AG04449 (cell line): ENCODE measurements at regions of chr19 and their contacts with region 1.

Region 1: DNA sequence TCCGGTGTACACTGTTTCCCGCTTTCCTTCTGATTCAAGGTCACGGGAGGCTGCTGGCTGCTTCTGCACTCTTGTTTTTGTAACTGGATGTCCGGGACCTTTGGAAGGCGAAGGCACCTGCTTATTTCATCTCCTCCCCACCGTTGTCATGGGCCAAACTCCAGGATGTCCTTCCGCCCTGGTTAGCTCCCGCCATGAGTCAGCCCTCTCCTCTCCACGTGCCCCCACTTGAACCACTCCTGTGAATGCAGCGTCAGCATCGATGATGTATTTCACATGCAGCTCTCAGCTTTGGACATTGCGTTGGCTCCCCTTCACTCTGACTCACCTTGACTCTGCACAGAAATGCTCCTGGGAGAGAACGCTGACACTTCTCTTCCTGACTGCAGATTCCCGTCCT is 5.5 kb upstream of the GALP start:
- DNase-seq: no peak
- H3K4me3 ChIP-seq: no peak overlapping the region
- CTCF ChIP-seq: no peak

Region 2: GRCh38 chr19:56066152-56067023 is 103.9 kb before region 1 on chr19:
- CTCF ChIA-PET with region 1: interaction called, 10 read pairs
- POLR2A ChIA-PET with region 1: interaction called, 3 read pairs
- DNase-seq: no peak
- H3K4me3 ChIP-seq: peak overlapping the region; percentile 36
- CTCF ChIP-seq: peak; percentile 93

Region 3: DNA sequence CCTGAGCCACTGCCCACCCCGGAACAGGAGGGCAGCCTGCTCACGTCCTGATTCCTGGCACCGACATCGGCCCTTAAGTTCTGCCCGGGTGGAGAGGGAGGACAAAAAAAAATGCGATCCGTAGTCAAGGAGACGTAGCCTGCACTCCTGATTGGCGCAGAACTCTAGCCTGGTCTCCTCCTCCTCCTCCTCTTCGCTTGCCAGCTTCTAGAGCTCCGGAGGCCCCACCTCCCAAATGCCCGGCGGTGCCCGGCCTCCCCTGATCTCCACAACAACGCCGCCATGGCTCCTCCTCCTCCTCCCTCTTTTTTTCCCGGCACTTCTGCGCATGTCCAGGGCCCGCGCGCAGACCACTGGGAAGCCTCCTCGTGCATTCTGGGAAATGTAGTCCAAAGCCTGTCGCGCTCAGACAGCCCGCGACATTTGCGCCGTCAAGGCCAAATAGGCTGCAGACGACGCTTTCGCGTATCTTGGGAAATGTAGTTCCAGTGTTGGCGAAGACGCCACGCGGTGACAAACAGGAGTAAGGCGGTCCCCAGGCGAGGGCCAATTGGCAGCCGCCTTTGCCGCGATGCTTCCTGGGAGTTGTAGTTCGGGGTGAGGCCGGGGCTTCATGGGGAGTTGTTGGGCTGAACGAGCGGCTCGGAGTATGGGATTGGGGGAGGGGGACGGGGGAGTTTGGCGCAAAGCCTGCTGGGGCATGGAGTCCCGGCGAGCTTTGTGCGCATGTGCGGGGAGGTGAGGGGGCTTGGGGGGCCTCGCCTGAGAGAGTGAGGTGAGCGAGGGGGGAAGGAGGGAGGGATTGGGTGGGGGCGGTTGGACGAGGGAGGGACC is 29.5 kb before region 1 on chr19 and contains the start of gene ZNF444:
- CTCF ChIA-PET with region 1: no interaction called
- POLR2A ChIA-PET with region 1: no interaction called
- DNase-seq: peak; percentile 97
- H3K4me3 ChIP-seq: peak within 1 kb of the TSS; percentile 66
- CTCF ChIP-seq: no peak